Dorsolateral prefrontal cortex (tissue), 120 donors: ENCODE measurements at regions of chr12 and their contacts with region 1.

Region 1: DNA sequence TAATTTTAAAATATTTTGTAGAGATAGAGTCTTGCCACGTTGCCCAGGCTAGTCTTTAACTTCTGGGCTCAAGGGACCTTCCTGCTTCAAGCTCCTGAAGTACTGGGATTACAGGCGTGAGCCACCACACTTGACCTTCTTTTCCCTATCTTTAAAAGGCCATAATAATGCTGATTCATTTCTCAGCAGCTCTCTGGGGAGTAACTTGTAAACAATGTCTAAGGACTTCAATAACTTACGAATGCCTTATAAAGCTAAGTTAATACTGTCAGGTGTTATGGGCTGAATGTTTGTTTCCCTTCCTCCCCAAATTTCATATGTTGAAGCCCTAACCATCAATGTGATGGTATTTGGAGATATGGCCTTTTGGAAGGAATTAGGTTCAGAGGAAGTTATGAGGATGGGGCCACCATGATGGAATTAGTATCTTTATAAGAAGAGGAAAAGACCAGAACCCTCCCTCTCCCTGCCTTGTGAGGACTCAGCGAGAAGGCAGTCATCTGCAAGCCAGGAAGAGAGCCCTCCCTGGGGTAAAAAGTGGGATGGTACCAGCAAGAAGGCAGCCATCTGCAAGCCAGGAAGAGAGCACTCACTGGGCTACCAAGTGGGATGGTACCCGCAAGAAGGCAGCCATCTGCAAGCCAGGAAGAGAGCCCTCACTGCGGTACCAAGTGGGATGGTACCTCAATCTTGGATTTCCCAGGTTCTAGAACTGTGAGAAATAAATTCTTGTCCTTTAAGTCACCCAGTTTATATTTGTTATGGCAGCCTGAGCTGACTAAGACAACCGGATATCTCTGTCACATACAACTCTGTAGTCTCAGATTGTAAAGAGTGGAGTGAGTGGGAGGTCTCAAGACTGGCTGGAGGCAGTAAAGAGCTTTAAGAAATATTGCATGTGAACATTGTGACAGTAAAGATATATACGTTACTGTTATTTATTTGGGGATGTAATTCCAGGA is 16.3 kb upstream of the YBX3 start:
- DNase-seq: no peak
- H3K4me3 ChIP-seq: no peak overlapping the region
- H3K27ac ChIP-seq: no peak overlapping the region
- H3K27me3 ChIP-seq: peaks cover 0 to 4% (median 0%) of the 10 kb centered on the region in 45 donors
- CTCF ChIP-seq: no peak

Region 2: GRCh38 chr12:10319388-10319787 is 420.1 kb before region 1 on chr12:
- intact Hi-C with region 1: loop called in 1 of 2 experiments (anchors 5 kb)
- DNase-seq: no peak
- H3K4me3 ChIP-seq: no peak overlapping the region
- H3K27ac ChIP-seq: no peak overlapping the region
- H3K27me3 ChIP-seq: no peaks in the 10 kb centered on the region
- CTCF ChIP-seq: no peak